Colonic mucosa (tissue), 4 donors: ENCODE measurements at regions of chr11 and their contacts with region 1.

Region 1: DNA sequence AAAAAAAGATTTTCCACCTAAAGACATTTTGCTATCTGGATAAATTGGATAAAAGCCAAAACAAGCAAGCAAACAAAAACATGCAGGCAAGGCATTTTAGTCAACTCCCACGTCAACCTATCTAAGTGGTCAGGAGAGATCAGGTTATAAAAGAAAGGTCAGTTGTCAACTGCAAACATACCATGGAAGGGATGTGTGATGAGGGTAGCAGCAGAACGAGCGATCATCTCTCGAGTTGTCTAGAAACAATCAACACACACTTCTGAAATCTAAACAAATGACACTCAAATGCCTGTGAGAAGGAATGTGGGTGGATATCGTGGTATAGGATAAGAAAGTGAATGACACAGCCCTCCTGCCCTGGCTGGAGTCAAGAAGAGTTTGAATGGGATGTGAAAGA is 10.9 kb downstream of the MTCH2 start:
- DNase-seq: no peak
- H3K4me3 ChIP-seq: no peak overlapping the region
- H3K27ac ChIP-seq: no peak overlapping the region
- H3K4me1 ChIP-seq: no peaks in the 10 kb centered on the region
- H3K27me3 ChIP-seq: no peaks in the 10 kb centered on the region
- CTCF ChIP-seq: no peak

Region 2: DNA sequence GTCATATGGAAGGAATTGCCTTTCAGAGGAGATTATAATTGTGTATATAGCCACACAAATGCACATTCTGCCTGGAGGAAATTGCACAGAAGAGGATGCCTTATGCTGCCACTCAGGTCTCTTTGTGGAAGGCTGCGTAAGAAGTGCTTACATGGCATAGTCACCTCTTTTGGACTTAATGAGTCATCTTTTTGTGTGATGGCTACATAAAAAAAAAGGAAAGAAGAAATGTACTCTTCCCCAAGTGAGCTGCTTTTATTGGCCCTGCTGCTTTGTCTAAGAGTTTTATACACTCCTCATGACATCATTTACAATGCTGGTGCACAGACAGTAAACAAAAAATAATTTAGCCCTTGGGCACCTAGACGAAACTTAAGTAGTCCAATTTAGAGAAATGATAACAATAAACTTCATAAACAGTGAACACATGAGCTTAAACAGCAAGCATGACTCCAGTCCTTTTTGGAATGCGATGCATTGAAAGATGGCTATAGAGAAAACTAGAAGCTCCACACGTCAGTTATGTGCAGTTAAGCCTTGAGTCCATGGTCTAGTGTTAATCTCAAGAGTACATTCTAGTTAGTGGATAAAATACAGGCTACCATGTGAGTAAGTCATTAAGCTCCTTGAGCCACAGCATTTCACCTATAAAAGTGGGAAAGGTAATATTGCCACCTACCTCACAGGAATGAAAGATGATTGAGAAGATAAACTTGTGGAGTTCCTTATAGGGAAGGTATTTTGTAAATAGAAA is 682.9 kb before region 1 on chr11:
- intact Hi-C with region 1: no loop called
- DNase-seq: peak; percentile 43
- H3K4me3 ChIP-seq: no peak overlapping the region
- H3K27ac ChIP-seq: peak overlapping the region; percentile 30
- H3K4me1 ChIP-seq: no peaks in the 10 kb centered on the region
- H3K27me3 ChIP-seq: no peaks in the 10 kb centered on the region
- CTCF ChIP-seq: no peak

Region 3: DNA sequence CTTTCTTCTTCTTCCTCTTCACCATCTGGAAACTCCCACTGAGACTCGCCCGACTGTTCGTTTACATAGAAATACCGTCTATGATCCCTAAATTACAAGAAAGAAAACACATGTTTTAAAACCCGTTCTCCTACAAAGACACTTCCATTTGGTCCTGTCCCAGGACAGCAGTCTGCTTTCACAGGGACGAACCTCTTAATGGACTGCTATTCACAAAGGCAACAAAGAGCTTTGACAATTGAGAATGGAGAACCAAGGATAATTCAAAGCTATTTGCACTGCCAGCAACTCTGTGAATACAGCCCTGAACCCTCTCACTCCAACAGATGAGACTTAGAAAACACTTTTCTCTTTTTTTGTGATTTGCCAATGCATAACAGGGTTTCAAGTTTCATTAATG is 100.0 kb after region 1 on chr11:
- intact Hi-C with region 1: loop called (anchors 10 kb)
- DNase-seq: no peak
- H3K4me3 ChIP-seq: no peak overlapping the region
- H3K27ac ChIP-seq: no peak overlapping the region
- H3K4me1 ChIP-seq: no peaks in the 10 kb centered on the region
- H3K27me3 ChIP-seq: no peaks in the 10 kb centered on the region
- CTCF ChIP-seq: no peak